GM12878 (cell line): ENCODE measurements at regions of chr3 and their contacts with region 1.

Region 1: GRCh38 chr3:107660306-107660976 is 137.7 kb downstream of the BBX start:
- DNase-seq: no peak
- ATAC-seq: peak; percentile 61
- H3K4me3 ChIP-seq: no peak overlapping the region
- H3K27ac ChIP-seq: no peak overlapping the region
- H3K4me1 ChIP-seq: peaks cover 13% of the 10 kb centered on the region
- H3K27me3 ChIP-seq: no peaks in the 10 kb centered on the region
- CTCF ChIP-seq: peak; percentile 49 to 61 (median 57); a peak in 5 of 6 replicates
- EP300 ChIP-seq: no peak
- POLR2A ChIP-seq: no peak
- RAD21 ChIP-seq: peak; percentile 66

Region 2: GRCh38 chr3:105997800-105998526 is 1662.5 kb before region 1 on chr3:
- CTCF ChIA-PET with region 1: no interaction called
- POLR2A ChIA-PET with region 1: no interaction called
- RAD21 ChIA-PET with region 1: no interaction called
- SMC1A ChIA-PET with region 1: no interaction called
- in situ Hi-C with region 1: no loop called
- intact Hi-C with region 1: no loop called
- DNase-seq: no peak
- ATAC-seq: no peak
- H3K4me3 ChIP-seq: no peak overlapping the region
- H3K27ac ChIP-seq: no peak overlapping the region
- H3K4me1 ChIP-seq: no peaks in the 10 kb centered on the region
- H3K27me3 ChIP-seq: no peaks in the 10 kb centered on the region
- CTCF ChIP-seq: no peak
- EP300 ChIP-seq: no peak
- POLR2A ChIP-seq: no peak
- RAD21 ChIP-seq: no peak

Region 3: DNA sequence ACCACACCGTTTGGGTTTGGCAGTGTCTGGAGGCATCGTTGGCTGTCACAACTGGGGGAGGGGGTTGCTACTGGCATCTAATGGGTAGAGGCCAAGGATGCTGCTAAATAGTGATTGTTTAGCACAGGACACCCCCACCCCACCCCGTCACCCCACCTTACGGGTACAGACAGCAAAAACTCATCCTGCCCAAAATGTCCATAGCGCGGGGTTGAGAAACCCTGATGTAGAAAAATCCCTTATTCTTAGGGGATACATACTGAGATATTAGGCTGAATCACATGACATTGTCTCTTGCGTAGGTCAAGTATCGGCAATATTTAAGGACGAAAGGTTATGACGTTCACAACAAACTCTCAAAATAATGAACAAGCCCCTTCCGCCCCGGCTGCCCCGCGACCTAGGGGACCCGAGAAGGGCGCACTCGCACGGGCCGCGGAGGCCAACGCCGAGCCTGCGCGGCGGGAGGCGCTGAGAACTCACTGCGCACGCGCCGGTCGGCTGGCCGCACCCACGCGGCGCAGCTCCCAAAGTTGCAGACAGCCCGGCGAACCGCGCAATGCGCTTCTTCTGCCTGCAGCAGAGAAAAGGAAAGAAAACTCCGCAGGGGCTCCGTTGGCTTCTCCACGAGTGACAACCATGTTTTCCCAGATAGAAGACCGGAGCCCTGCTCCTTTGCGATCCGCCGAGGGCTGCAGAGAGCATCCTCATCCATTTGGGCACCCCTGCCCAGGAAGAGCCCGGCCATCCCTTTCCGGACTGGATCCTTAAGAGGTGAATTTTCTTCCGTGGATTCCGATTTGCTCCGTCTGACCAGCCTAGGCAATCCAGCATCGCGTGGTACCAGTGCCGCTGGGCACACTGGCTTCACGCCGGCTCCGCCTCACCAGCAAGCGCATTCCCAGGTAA is 420.0 kb before region 1 on chr3:
- CTCF ChIA-PET with region 1: no interaction called
- POLR2A ChIA-PET with region 1: no interaction called
- RAD21 ChIA-PET with region 1: no interaction called
- SMC1A ChIA-PET with region 1: no interaction called
- in situ Hi-C with region 1: no loop called
- intact Hi-C with region 1: no loop called
- DNase-seq: peak; percentile 24
- ATAC-seq: peak; percentile 98
- H3K4me3 ChIP-seq: peak overlapping the region; percentile 86
- H3K27ac ChIP-seq: no peak overlapping the region
- H3K4me1 ChIP-seq: no peaks in the 10 kb centered on the region; the same call in 1 of the 2 replicates
- H3K27me3 ChIP-seq: no peaks in the 10 kb centered on the region
- CTCF ChIP-seq: no peak
- EP300 ChIP-seq: no peak
- POLR2A ChIP-seq: peak; percentile 59; the same call in 1 of the 2 replicates
- RAD21 ChIP-seq: no peak

Region 4: GRCh38 chr3:107633327-107634098 is 26.9 kb before region 1 on chr3:
- CTCF ChIA-PET with region 1: interaction called, 20 read pairs
- POLR2A ChIA-PET with region 1: interaction called, 3 read pairs
- RAD21 ChIA-PET with region 1: interaction called, 5 read pairs
- SMC1A ChIA-PET with region 1: interaction called, 13 read pairs
- in situ Hi-C with region 1: no loop called
- intact Hi-C with region 1: no loop called
- DNase-seq: peak; percentile 56
- ATAC-seq: peak; percentile 94
- H3K4me3 ChIP-seq: peak overlapping the region; percentile 40; the same call in 1 of the 2 replicates
- H3K27ac ChIP-seq: peak overlapping the region; percentile 63
- H3K4me1 ChIP-seq: peaks cover 20% of the 10 kb centered on the region
- H3K27me3 ChIP-seq: no peaks in the 10 kb centered on the region
- CTCF ChIP-seq: no peak
- EP300 ChIP-seq: peak; percentile 63 to 77
- POLR2A ChIP-seq: no peak
- RAD21 ChIP-seq: no peak

Region 5: DNA sequence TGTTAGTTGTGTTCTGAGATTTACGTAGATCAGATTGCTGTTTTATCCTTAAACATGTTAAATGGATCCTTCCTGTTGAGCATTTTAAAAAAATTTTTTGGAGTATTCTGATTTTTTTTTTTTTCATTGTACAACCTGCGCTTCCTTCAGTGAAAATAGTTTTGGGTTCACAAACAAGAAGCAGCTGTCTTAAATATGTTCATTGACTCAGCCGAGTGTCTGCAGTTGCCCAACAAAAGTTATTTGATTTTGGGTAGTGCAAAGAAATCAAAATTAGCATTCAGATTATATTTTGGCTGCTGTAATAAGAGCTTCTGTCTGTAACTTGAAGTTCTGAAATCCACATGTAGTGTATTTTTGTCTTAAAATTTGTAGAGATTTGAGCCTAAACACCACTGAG is 10.5 kb after region 1 on chr3:
- CTCF ChIA-PET with region 1: interaction called, 212 read pairs
- POLR2A ChIA-PET with region 1: interaction called, 3 read pairs
- RAD21 ChIA-PET with region 1: interaction called, 49 read pairs
- SMC1A ChIA-PET with region 1: interaction called, 115 read pairs
- in situ Hi-C with region 1: no loop called
- intact Hi-C with region 1: no loop called
- DNase-seq: no peak
- ATAC-seq: no peak
- H3K4me3 ChIP-seq: no peak overlapping the region
- H3K27ac ChIP-seq: no peak overlapping the region
- H3K4me1 ChIP-seq: peaks cover 7% of the 10 kb centered on the region
- H3K27me3 ChIP-seq: no peaks in the 10 kb centered on the region
- CTCF ChIP-seq: no peak
- EP300 ChIP-seq: no peak
- POLR2A ChIP-seq: no peak
- RAD21 ChIP-seq: no peak

Region 6: GRCh38 chr3:107690522-107691138 is 30.2 kb after region 1 on chr3:
- CTCF ChIA-PET with region 1: interaction called, 10 read pairs
- POLR2A ChIA-PET with region 1: no interaction called
- RAD21 ChIA-PET with region 1: interaction called, 5 read pairs
- SMC1A ChIA-PET with region 1: interaction called, 13 read pairs
- in situ Hi-C with region 1: no loop called
- intact Hi-C with region 1: no loop called
- DNase-seq: no peak
- ATAC-seq: peak; percentile 90
- H3K4me3 ChIP-seq: no peak overlapping the region
- H3K27ac ChIP-seq: no peak overlapping the region
- H3K4me1 ChIP-seq: no peaks in the 10 kb centered on the region
- H3K27me3 ChIP-seq: no peaks in the 10 kb centered on the region
- CTCF ChIP-seq: peak; percentile 32 to 50 (median 39); a peak in 4 of 6 replicates
- EP300 ChIP-seq: no peak
- POLR2A ChIP-seq: no peak
- RAD21 ChIP-seq: peak; percentile 33; the same call in 1 of the 2 replicates

Region 7: DNA sequence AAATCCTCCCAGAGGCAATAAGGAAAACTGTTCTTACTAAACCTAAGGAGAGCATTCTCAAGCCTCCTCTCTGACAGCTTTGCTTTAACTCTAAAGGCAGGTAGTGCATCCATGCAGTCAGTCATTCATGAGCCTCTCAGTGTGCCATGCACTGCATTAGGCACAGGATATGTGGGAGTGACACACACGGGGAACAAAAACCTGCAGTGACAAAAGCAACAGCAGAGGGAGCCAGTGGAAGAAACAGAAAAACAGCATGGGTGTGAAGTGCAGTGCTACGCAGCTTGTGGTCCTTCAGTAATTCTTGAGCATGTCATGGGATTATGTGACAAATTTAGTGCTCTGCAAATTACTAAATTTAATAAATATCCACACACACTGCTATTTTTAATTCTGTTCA is 93.0 kb after region 1 on chr3:
- CTCF ChIA-PET with region 1: interaction called, 40 read pairs
- POLR2A ChIA-PET with region 1: no interaction called
- RAD21 ChIA-PET with region 1: interaction called, 3 read pairs
- SMC1A ChIA-PET with region 1: interaction called, 10 read pairs
- in situ Hi-C with region 1: no loop called
- intact Hi-C with region 1: no loop called
- DNase-seq: no peak
- ATAC-seq: peak; percentile 70
- H3K4me3 ChIP-seq: no peak overlapping the region
- H3K27ac ChIP-seq: no peak overlapping the region
- H3K4me1 ChIP-seq: no peaks in the 10 kb centered on the region
- H3K27me3 ChIP-seq: no peaks in the 10 kb centered on the region
- CTCF ChIP-seq: peak; percentile 41 to 45 (median 44); a peak in 5 of 6 replicates
- EP300 ChIP-seq: no peak
- POLR2A ChIP-seq: no peak
- RAD21 ChIP-seq: peak; percentile 36; the same call in 1 of the 2 replicates

Region 8: DNA sequence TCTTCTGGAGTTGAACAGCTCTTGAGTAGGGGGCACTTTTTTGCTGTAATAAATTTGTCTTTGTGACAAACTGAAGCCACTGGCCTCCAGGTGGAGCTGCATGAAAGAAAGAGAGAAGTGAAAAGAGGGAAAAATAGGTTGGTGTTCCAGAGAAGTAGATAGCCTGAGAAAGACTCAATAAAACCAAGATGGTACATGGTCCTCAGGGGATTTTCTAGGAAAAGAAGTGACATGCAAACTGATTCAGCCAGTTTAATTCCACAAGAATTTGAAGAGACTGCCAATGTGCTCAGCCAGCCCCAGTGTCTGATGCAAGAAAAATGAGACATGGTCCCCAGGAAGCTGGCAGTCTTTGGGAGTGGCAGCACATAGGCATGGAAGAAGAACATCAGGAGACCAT is 277.7 kb after region 1 on chr3:
- CTCF ChIA-PET with region 1: no interaction called
- POLR2A ChIA-PET with region 1: no interaction called
- RAD21 ChIA-PET with region 1: no interaction called
- SMC1A ChIA-PET with region 1: no interaction called
- in situ Hi-C with region 1: no loop called
- intact Hi-C with region 1: no loop called
- DNase-seq: no peak
- ATAC-seq: no peak
- H3K4me3 ChIP-seq: no peak overlapping the region
- H3K27ac ChIP-seq: no peak overlapping the region
- H3K4me1 ChIP-seq: no peaks in the 10 kb centered on the region
- H3K27me3 ChIP-seq: no peaks in the 10 kb centered on the region; a peak in 1 of 4 replicates
- CTCF ChIP-seq: peak; percentile 19 to 47 (median 25); a peak in 4 of 6 replicates
- EP300 ChIP-seq: no peak
- POLR2A ChIP-seq: no peak
- RAD21 ChIP-seq: peak; percentile 62

Region 9: DNA sequence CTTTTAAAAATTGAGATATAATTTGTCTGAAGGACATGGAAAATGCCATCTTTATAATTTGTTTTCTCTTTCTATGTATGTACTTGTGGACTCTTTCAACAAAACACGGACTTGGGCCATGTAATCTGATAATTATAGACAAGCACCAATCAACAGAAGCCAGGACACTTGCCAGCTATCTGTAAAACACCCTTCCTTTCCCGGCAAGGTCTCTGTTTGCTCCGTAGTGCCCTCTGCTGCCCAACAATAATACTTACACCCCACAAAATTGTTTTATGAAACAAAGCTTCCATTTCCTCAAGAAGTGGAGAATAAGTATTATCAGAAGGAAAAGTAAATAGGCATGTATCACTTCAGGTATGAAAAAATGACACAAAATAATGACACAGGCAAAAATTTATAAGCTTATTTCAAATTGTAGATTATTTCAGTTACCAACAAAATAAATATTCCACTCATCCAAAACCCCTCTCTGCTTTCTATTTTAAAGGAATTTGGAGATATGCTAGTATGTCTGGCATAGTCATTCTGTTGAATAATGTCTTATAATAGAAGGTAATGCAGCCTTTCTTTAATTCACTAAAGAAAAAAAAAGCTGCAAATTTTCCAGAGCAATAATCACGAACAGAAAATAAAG is 817.2 kb after region 1 on chr3:
- CTCF ChIA-PET with region 1: interaction called, 10 read pairs
- POLR2A ChIA-PET with region 1: no interaction called
- RAD21 ChIA-PET with region 1: no interaction called
- SMC1A ChIA-PET with region 1: no interaction called
- in situ Hi-C with region 1: no loop called
- intact Hi-C with region 1: no loop called
- DNase-seq: peak; percentile 12
- ATAC-seq: peak; percentile 89
- H3K4me3 ChIP-seq: no peak overlapping the region
- H3K27ac ChIP-seq: no peak overlapping the region
- H3K4me1 ChIP-seq: no peaks in the 10 kb centered on the region
- H3K27me3 ChIP-seq: no peaks in the 10 kb centered on the region
- CTCF ChIP-seq: peak; percentile 66 to 70 (median 69)
- EP300 ChIP-seq: no peak
- POLR2A ChIP-seq: no peak
- RAD21 ChIP-seq: peak; percentile 86